ENCODE measurements at regions of chr5 and their contacts with region 1.

Region 1: GRCh38 chr5:97364731-97365130 is 181.7 kb upstream of the RIOK2 start:
- DNase-seq: no peak
- ATAC-seq: no peak
- H3K4me3 ChIP-seq: no peak overlapping the region
- H3K27ac ChIP-seq: no peak overlapping the region
- H3K4me1 ChIP-seq: no peaks in the 10 kb centered on the region
- H3K27me3 ChIP-seq: no peaks in the 10 kb centered on the region
- CTCF ChIP-seq: no peak
- POLR2A ChIP-seq: no peak
- RAD21 ChIP-seq: no peak

Region 2: GRCh38 chr5:96629774-96630173 is 735.0 kb before region 1 on chr5:
- CTCF ChIA-PET with region 1: no interaction called
- POLR2A ChIA-PET with region 1: no interaction called
- dilution Hi-C with region 1: no loop called
- in situ Hi-C with region 1: no loop called
- intact Hi-C with region 1: no loop called
- DNase-seq: peak; percentile 89
- ATAC-seq: peak; percentile 81
- H3K4me3 ChIP-seq: no peak overlapping the region
- H3K27ac ChIP-seq: no peak overlapping the region
- H3K4me1 ChIP-seq: peaks cover 25% of the 10 kb centered on the region
- H3K27me3 ChIP-seq: no peaks in the 10 kb centered on the region
- CTCF ChIP-seq: no peak
- POLR2A ChIP-seq: no peak
- RAD21 ChIP-seq: no peak

Region 3: GRCh38 chr5:96973532-96974401 is 391.0 kb before region 1 on chr5:
- CTCF ChIA-PET with region 1: no interaction called
- POLR2A ChIA-PET with region 1: no interaction called
- dilution Hi-C with region 1: no loop called
- in situ Hi-C with region 1: no loop called
- intact Hi-C with region 1: loop called (anchors 5 kb)
- DNase-seq: no peak
- ATAC-seq: no peak
- H3K4me3 ChIP-seq: no peak overlapping the region
- H3K27ac ChIP-seq: no peak overlapping the region
- H3K4me1 ChIP-seq: peaks cover 5% of the 10 kb centered on the region
- H3K27me3 ChIP-seq: no peaks in the 10 kb centered on the region; the same call in 1 of the 2 replicates
- CTCF ChIP-seq: no peak
- POLR2A ChIP-seq: no peak
- RAD21 ChIP-seq: no peak

Measured in IMR-90 (cell line).